ENCODE measurements at regions of chr22 and their contacts with region 1.

Region 1: GRCh38 chr22:32411829-32412592 is at the start of gene RTCB:
- DNase-seq: peak; percentile 91 to 94
- H3K4me3 ChIP-seq: peak within 1 kb of the TSS; percentile 81 to 97
- H3K27ac ChIP-seq: peak within 1 kb of the TSS; percentile 66
- H3K4me1 ChIP-seq: peaks cover 0 to 30% (median 15%) of the 10 kb centered on the region in 4 donors
- H3K27me3 ChIP-seq: no peaks in the 10 kb centered on the region
- CTCF ChIP-seq: no peak

Region 2: GRCh38 chr22:32474635-32475467 is 62.8 kb after region 1 on chr22 and contains the start of gene FBXO7:
- intact Hi-C with region 1: loop called (anchors 5 kb)
- DNase-seq: peak; percentile 92 to 95
- H3K4me3 ChIP-seq: peak within 1 kb of the TSS; percentile 85 to 93
- H3K27ac ChIP-seq: peak within 1 kb of the TSS; percentile 98 to 99
- H3K4me1 ChIP-seq: peaks cover 0 to 32% (median 25%) of the 10 kb centered on the region in 4 donors
- H3K27me3 ChIP-seq: no peaks in the 10 kb centered on the region
- CTCF ChIP-seq: peak; percentile 36 to 37

Measured in tibial artery (tissue), 4 donors.